ENCODE measurements at regions of chr7 and their contacts with region 1.

Region 1: GRCh38 chr7:44573464-44574286 is at the start of gene DDX56:
- DNase-seq: peak; percentile 94 to 97 (median 97)
- ATAC-seq: peak; percentile 96 to 98 (median 97)
- H3K4me3 ChIP-seq: peak within 1 kb of the TSS; percentile 65 to 97 (median 86)
- H3K27ac ChIP-seq: peak within 1 kb of the TSS; percentile 53 to 95 (median 88)
- H3K4me1 ChIP-seq: peaks cover 4 to 30% (median 20%) of the 10 kb centered on the region in 12 donors
- H3K27me3 ChIP-seq: no peaks in the 10 kb centered on the region
- CTCF ChIP-seq: peak in 2 of 12 donors; percentile 6 to 12
- POLR2A ChIP-seq: peak; percentile 58 to 94
- total RNA-seq, gene DDX56: 19.4 to 43.4 (median 28.4) TPM

Region 2: GRCh38 chr7:44490351-44491200 is 83.1 kb before region 1 on chr7 and contains the start of gene NUDCD3:
- intact Hi-C with region 1: loop called in 3 of 10 experiments (anchors 5 to 10 kb)
- DNase-seq: peak; percentile 86 to 91 (median 88)
- ATAC-seq: peak; percentile 95 to 98 (median 97)
- H3K4me3 ChIP-seq: peak within 1 kb of the TSS; percentile 55 to 96 (median 90)
- H3K27ac ChIP-seq: peak within 1 kb of the TSS; percentile 84 to 100 (median 98)
- H3K4me1 ChIP-seq: peaks cover 8 to 46% (median 33%) of the 10 kb centered on the region in 12 donors
- H3K27me3 ChIP-seq: peaks cover 0 to 4% (median 0%) of the 10 kb centered on the region in 9 donors
- CTCF ChIP-seq: peak in 5 of 12 donors; percentile 5 to 33 (median 21)
- POLR2A ChIP-seq: peak in 1 of 2 donors; percentile 40
- total RNA-seq, gene NUDCD3: 59.5 to 133 (median 98.7) TPM

Measured in heart left ventricle (tissue), 16 donors.